ENCODE measurements at regions of chr11 and their contacts with region 1.

Region 1: DNA sequence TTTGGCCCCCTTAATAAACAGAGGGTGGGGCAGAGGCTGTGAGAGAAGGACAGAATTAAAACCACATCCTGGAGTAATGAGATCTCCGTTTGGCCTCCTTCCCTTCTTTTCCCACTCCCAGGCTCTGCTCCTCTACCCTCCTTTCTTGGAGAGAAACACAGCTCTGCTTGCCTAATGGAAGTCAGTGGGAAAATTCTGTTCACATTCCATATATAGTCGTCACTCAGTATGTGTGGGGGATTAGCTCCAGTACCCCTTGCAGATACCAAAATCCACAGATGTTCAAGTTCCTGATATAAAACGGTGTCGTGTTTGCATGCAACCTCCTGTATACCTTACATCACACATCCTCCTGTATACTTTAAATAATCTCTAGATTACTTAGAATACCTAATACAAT is 37.6 kb upstream of the THY1 start:
- DNase-seq: no peak
- H3K4me3 ChIP-seq: no peak overlapping the region
- H3K27ac ChIP-seq: no peak overlapping the region
- H3K4me1 ChIP-seq: no peaks in the 10 kb centered on the region
- H3K27me3 ChIP-seq: peaks cover 0 to 2% of the 10 kb centered on the region in 2 experiments
- CTCF ChIP-seq: no peak
- POLR2A ChIP-seq: no peak

Region 2: GRCh38 chr11:119155733-119156492 is 304.7 kb before region 1 on chr11:
- CTCF ChIA-PET with region 1: no interaction called
- POLR2A ChIA-PET with region 1: no interaction called
- dilution Hi-C with region 1: no loop called
- intact Hi-C with region 1: loop called (anchors 10 kb)
- DNase-seq: no peak
- H3K4me3 ChIP-seq: no peak overlapping the region
- H3K27ac ChIP-seq: no peak overlapping the region
- H3K4me1 ChIP-seq: no peaks in the 10 kb centered on the region
- H3K27me3 ChIP-seq: no peaks in the 10 kb centered on the region
- CTCF ChIP-seq: peak; percentile 20 to 29
- POLR2A ChIP-seq: no peak

Region 3: GRCh38 chr11:119295178-119295577 is 165.4 kb before region 1 on chr11:
- CTCF ChIA-PET with region 1: no interaction called
- POLR2A ChIA-PET with region 1: no interaction called
- dilution Hi-C with region 1: no loop called
- intact Hi-C with region 1: no loop called
- DNase-seq: no peak
- H3K4me3 ChIP-seq: no peak overlapping the region
- H3K27ac ChIP-seq: no peak overlapping the region
- H3K4me1 ChIP-seq: no peaks in the 10 kb centered on the region
- H3K27me3 ChIP-seq: no peaks in the 10 kb centered on the region
- CTCF ChIP-seq: no peak
- POLR2A ChIP-seq: no peak

Measured in endothelial cell of umbilical vein (primary cell).